ENCODE measurements at regions of chr4 and their contacts with region 1.

Region 1: DNA sequence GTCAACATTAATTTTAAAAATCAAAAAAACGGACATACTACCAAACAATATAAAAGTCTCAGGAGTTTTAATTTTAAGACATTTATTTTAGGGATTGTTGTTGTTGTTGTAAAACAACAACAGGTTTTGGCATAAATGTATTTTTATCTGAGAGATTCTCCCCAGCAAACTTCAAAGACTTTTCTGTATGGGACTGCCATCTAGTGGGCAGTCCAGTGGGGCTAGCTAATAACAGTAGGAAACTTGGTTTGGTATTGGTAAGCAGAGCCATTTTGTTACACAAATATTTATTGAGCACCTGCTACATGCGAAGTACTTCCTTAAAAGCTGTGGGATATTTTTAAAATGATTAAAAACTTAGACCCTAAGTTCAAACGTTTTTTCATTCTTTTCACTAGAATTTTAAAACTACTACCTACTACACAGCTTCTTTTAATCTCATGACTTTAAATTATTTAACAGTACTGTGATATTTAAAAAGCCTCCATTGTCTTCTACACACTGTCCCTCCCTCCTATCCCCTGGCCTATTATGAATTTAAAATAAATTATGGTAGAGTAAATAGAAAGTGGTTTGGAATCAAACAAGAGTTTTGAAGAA is 1028.4 kb upstream of the INTU start:
- DNase-seq: no peak
- H3K4me3 ChIP-seq: no peak overlapping the region
- H3K27ac ChIP-seq: no peak overlapping the region
- H3K4me1 ChIP-seq: no peaks in the 10 kb centered on the region
- H3K27me3 ChIP-seq: no peaks in the 10 kb centered on the region
- CTCF ChIP-seq: peak in 3 of 4 experiments; percentile 33 to 64 (median 41)
- EP300 ChIP-seq: no peak
- POLR2A ChIP-seq: no peak

Region 2: GRCh38 chr4:125741825-125742452 is 862.4 kb before region 1 on chr4:
- intact Hi-C with region 1: loop called (anchors 10 kb)
- DNase-seq: no peak
- H3K4me3 ChIP-seq: no peak overlapping the region
- H3K27ac ChIP-seq: no peak overlapping the region
- H3K4me1 ChIP-seq: peaks cover 0 to 6% (median 0%) of the 10 kb centered on the region in 4 donors
- H3K27me3 ChIP-seq: no peaks in the 10 kb centered on the region
- CTCF ChIP-seq: peak; percentile 8 to 64 (median 37)
- EP300 ChIP-seq: no peak
- POLR2A ChIP-seq: no peak

Region 3: GRCh38 chr4:126778348-126778747 is 174.0 kb after region 1 on chr4:
- intact Hi-C with region 1: no loop called
- DNase-seq: no peak
- H3K4me3 ChIP-seq: no peak overlapping the region
- H3K27ac ChIP-seq: no peak overlapping the region
- H3K4me1 ChIP-seq: peaks cover 0 to 10% (median 1%) of the 10 kb centered on the region in 4 donors
- H3K27me3 ChIP-seq: no peaks in the 10 kb centered on the region
- CTCF ChIP-seq: no peak
- EP300 ChIP-seq: no peak
- POLR2A ChIP-seq: no peak